MCF 10A (cell line): ENCODE measurements at regions of chr18 and their contacts with region 1.

Region 1: GRCh38 chr18:42114310-42114943 is 159.4 kb downstream of the PIK3C3 start:
- DNase-seq: peak; percentile 80
- H3K4me3 Mint-ChIP-seq: no peak overlapping the region
- H3K27ac Mint-ChIP-seq: no peak overlapping the region
- H3K4me1 Mint-ChIP-seq: peaks cover 8% of the 10 kb centered on the region
- H3K27me3 Mint-ChIP-seq: no peaks in the 10 kb centered on the region
- CTCF ChIP-seq: peak; percentile 82

Region 2: DNA sequence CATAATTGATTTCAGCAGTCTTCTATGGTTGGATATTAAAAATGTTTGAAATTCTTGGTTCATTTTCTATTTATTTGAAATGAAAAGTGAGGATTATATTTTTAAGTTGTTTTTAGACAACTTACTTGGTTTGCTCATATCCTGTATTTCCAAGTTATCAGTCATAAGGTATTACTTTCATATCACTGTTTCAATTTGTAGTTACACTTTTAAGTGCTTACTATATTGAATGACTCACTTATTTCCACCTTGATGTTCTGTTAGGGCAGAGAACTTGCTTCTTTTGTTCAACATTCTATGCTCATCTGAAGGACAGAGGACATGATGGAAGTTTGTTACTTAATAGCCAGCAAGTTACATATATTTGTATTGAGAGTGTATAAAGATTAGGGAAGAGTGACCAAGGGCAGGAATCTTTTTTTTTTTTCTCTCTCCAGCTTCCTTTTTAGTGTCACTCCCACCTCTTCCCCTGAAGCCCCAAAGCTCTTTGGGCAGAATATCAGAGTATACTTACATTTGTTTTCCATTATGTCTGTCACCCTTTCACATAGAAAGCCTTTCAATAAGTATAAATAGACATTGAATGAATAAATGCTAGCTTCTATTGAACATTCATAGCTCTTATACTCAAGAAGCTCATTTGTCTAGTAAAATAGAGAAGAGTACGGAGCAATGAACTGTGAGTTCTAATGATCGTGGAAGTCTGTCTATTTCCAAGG is 131.3 kb before region 1 on chr18:
- CTCF ChIA-PET with region 1: no interaction called
- POLR2A ChIA-PET with region 1: no interaction called
- intact Hi-C with region 1: no loop called
- DNase-seq: peak; percentile 1
- H3K4me3 Mint-ChIP-seq: no peak overlapping the region
- H3K27ac Mint-ChIP-seq: no peak overlapping the region
- H3K4me1 Mint-ChIP-seq: no peaks in the 10 kb centered on the region
- H3K27me3 Mint-ChIP-seq: no peaks in the 10 kb centered on the region
- CTCF ChIP-seq: no peak

Region 3: DNA sequence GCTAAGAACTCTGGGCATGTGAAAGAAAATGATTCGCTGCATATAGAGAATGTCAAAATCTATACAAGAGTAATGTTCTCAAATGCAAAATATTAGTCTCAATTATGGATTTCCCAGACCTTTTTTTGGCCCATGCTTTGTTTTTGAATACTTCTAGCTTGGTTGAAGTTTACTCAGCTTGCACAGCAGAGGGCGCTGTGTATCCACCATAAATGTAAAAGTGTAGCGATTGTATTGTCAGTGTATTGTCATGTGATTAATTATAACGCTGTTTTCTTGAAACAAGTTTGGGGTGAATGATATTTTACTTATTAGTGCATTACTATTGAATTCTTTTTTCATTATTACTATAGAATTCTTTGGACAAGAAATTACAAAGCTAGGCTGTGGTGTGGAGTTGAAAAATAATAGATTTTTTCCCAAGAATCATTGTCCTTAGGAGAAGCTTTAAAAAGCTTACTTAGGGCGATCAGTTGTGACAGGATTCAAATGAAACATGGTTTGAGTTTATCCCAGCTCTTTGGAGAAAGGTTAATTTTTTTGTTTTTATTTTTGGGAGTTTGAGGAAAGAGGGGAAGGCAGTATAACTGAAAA is 61.1 kb before region 1 on chr18:
- CTCF ChIA-PET with region 1: interaction called, 11 read pairs
- POLR2A ChIA-PET with region 1: interaction called, 3 read pairs
- intact Hi-C with region 1: loop called (anchors 2 kb)
- DNase-seq: peak; percentile 56
- H3K4me3 Mint-ChIP-seq: no peak overlapping the region
- H3K27ac Mint-ChIP-seq: peak overlapping the region; percentile 59
- H3K4me1 Mint-ChIP-seq: peaks cover 7% of the 10 kb centered on the region
- H3K27me3 Mint-ChIP-seq: no peaks in the 10 kb centered on the region
- CTCF ChIP-seq: peak; percentile 66

Region 4: DNA sequence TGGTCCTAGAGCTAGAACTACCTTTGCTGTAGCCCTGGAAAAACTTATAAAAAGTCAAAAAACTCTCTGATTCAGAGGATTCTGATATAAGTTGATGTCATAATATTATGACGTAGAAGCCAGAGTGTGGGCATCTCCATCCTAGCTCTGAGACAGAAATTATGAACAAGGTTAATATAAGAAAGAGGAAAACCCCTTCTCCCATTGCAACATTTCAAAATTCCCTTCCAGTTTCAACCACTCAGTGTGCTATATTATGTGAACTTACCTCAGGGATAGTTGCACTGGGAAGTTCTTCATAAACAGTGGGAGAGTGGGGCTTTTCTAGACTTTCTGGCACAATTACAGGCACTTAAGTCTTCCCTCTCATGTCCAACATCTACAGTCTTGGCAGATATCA is 12.2 kb after region 1 on chr18:
- CTCF ChIA-PET with region 1: interaction called, 17 read pairs
- POLR2A ChIA-PET with region 1: no interaction called
- intact Hi-C with region 1: no loop called
- DNase-seq: no peak
- H3K4me3 Mint-ChIP-seq: no peak overlapping the region
- H3K27ac Mint-ChIP-seq: no peak overlapping the region
- H3K4me1 Mint-ChIP-seq: no peaks in the 10 kb centered on the region
- H3K27me3 Mint-ChIP-seq: no peaks in the 10 kb centered on the region
- CTCF ChIP-seq: no peak

Region 5: GRCh38 chr18:42174909-42175308 is 60.5 kb after region 1 on chr18:
- CTCF ChIA-PET with region 1: no interaction called
- POLR2A ChIA-PET with region 1: no interaction called
- intact Hi-C with region 1: no loop called
- DNase-seq: peak; percentile 55
- H3K4me3 Mint-ChIP-seq: no peak overlapping the region
- H3K27ac Mint-ChIP-seq: no peak overlapping the region
- H3K4me1 Mint-ChIP-seq: no peaks in the 10 kb centered on the region
- H3K27me3 Mint-ChIP-seq: no peaks in the 10 kb centered on the region
- CTCF ChIP-seq: no peak

Region 6: GRCh38 chr18:42274488-42275137 is 160.2 kb after region 1 on chr18:
- CTCF ChIA-PET with region 1: interaction called, 44 read pairs
- POLR2A ChIA-PET with region 1: no interaction called
- intact Hi-C with region 1: loop called (anchors 1 kb)
- DNase-seq: peak; percentile 53
- H3K4me3 Mint-ChIP-seq: no peak overlapping the region
- H3K27ac Mint-ChIP-seq: no peak overlapping the region
- H3K4me1 Mint-ChIP-seq: no peaks in the 10 kb centered on the region
- H3K27me3 Mint-ChIP-seq: no peaks in the 10 kb centered on the region
- CTCF ChIP-seq: peak; percentile 10

Region 7: DNA sequence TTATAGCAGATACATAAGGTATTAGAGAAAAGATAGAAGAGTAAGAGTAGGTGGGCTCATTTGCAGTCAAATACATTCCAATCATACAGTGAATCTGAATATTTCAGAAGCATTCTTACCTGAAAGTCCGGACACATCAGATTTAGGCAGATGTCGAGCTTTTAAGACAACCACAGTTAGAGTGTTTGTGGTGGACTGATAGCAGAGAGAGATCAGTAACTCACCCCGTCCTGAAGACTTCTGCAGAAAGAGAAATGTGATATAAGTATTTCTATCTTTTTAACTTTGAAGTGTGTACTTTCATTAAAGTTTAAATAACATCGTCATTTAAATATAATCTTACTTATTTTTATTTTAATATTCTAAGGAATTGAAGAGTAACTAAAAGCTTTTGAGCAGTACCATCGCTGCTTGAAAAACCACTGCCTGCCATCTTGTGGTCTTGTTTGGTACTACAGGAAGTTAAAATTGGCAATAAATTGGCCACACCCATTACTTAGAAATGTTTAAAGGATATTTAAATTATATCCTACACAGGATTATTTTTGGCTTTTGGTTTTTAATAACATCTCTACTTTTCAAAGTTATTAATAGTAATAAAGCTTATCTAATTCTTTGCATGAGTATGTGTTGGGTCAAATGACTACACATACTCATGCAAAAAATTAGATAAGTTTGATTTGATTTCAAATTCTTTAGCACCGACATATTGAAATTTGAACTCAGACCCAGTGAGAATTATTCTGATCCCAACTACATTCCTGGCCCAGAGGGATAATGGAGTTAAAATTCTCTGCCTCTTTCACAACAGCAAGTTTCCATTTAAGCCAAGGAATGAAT is 1157.4 kb after region 1 on chr18:
- CTCF ChIA-PET with region 1: interaction called, 32 read pairs
- POLR2A ChIA-PET with region 1: interaction called, 5 read pairs
- intact Hi-C with region 1: loop called (anchors 5 kb)
- DNase-seq: peak; percentile 61
- H3K4me3 Mint-ChIP-seq: no peak overlapping the region
- H3K27ac Mint-ChIP-seq: no peak overlapping the region
- H3K4me1 Mint-ChIP-seq: no peaks in the 10 kb centered on the region
- H3K27me3 Mint-ChIP-seq: peaks cover 34% of the 10 kb centered on the region
- CTCF ChIP-seq: peak; percentile 74

Region 8: GRCh38 chr18:43563780-43564179 is 1449.4 kb after region 1 on chr18:
- CTCF ChIA-PET with region 1: interaction called, 9 read pairs
- POLR2A ChIA-PET with region 1: no interaction called
- intact Hi-C with region 1: loop called (anchors 2 kb)
- DNase-seq: peak; percentile 56
- H3K4me3 Mint-ChIP-seq: no peak overlapping the region
- H3K27ac Mint-ChIP-seq: no peak overlapping the region
- H3K4me1 Mint-ChIP-seq: no peaks in the 10 kb centered on the region
- H3K27me3 Mint-ChIP-seq: peaks cover 69% of the 10 kb centered on the region
- CTCF ChIP-seq: peak; percentile 65